ENCODE measurements at regions of chr6 and their contacts with region 1.

Region 1: GRCh38 chr6:31834434-31835198 is 7.1 kb downstream of the HSPA1B start:
- DNase-seq: peak in 1 of 2 donors; percentile 93
- H3K4me3 ChIP-seq: peak overlapping the region; percentile 78 to 85
- H3K27ac ChIP-seq: peak overlapping the region; percentile 94
- H3K4me1 ChIP-seq: peaks cover 69% of the 10 kb centered on the region
- H3K27me3 ChIP-seq: no peaks in the 10 kb centered on the region
- CTCF ChIP-seq: no peak
- POLR2A ChIP-seq: peak in 1 of 2 donors; percentile 38

Region 2: DNA sequence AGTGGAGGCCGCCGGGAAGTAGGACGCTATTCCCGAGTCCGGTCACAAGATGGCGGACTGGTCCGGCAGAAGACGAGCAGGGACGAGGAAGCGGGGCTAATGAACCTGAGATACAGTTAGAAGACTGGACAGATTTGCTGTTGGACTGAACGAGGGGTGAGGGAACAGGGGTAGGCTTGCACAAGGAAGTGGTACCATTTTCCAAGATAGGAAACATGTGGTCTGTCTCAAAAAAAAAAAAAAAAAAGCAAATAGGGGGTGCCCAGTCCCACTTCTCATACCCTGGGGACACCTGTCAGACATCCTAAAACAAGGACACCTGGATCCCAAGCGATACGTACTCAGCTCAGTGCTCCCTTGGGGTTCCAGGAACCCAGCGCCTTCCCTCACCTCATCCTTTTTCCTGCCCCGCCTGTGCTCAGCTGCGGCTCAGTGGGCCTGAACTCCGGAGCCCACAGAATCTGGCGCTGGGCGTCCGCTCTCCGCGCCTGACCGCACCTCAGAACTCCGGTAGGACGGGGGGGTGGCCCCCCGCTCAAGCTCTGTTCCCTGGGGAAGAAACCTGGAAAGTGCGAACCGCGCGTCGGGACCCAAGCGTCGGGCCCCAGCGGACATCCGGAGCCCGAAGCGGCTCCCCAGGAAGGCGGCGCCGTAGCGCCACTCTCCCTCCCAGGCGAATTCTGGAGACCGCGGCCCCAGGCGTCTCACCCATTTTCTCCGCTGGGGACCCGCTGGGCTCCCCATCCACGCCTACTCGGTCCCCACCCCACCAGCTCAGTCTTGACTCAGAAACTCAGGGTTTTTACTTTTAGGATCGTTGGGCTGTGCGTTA is 153.6 kb before region 1 on chr6 and contains the start of gene LY6G5C:
- intact Hi-C with region 1: loop called (anchors 5 kb)
- DNase-seq: peak in 1 of 2 donors; percentile 96
- H3K4me3 ChIP-seq: peak within 1 kb of the TSS; percentile 55 to 59
- H3K27ac ChIP-seq: peak within 1 kb of the TSS; percentile 92
- H3K4me1 ChIP-seq: peaks cover 25% of the 10 kb centered on the region
- H3K27me3 ChIP-seq: no peaks in the 10 kb centered on the region
- CTCF ChIP-seq: peak; percentile 50 to 69 (median 69)
- POLR2A ChIP-seq: no peak
- total RNA-seq, gene LY6G5C: 1.7 TPM

Region 3: GRCh38 chr6:31729515-31729978 is 105.1 kb before region 1 on chr6:
- intact Hi-C with region 1: loop called (anchors 5 kb)
- DNase-seq: peak in 1 of 2 donors; percentile 96
- H3K4me3 ChIP-seq: peak overlapping the region; percentile 82 to 94
- H3K27ac ChIP-seq: peak overlapping the region; percentile 99
- H3K4me1 ChIP-seq: peaks cover 53% of the 10 kb centered on the region
- H3K27me3 ChIP-seq: no peaks in the 10 kb centered on the region
- CTCF ChIP-seq: peak in 1 of 3 experiments; percentile 54
- POLR2A ChIP-seq: peak in 1 of 2 donors; percentile 63

Measured in vagina (tissue), 2 donors.